Activated T-helper 2 cell treated with anti-CD3 and anti-CD28 coated beads, Interferon-gamma antibody, Interleukin-2, Interleukin-4, amounts not matched to agents 10 μg/mL and 5 μg/mL and 100 μg/mL, durations not matched to agents 14 hours and 24 hours and 36 hours (primary cell): ENCODE measurements at regions of chr7 and their contacts with region 1.

Region 1: GRCh38 chr7:19677180-19677579 is 31.7 kb downstream of the POLR1F start:
- DNase-seq: no peak
- H3K4me3 Mint-ChIP-seq: no peak overlapping the region
- H3K27ac Mint-ChIP-seq: peak overlapping the region; percentile 72
- H3K4me1 Mint-ChIP-seq: peaks cover 21% of the 10 kb centered on the region
- H3K27me3 Mint-ChIP-seq: peaks cover 10% of the 10 kb centered on the region

Region 2: DNA sequence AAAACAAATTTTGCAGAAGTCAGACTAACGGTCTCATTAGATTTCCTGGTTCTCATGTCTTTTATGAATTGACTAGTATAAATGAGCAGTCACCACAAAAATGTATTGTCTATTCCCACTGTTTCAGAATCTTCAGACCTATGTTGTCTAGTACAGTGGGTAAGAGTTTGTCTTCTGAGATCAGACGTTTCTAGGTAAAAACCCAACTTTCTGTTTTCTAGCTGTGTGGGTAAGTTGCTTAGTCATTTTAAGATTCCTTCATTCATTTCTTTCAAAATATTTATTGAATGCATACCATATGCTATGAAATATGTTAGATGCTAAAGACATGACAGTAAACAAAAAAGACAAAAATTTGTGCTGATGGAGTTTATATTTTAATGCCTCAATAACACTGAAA is 124.6 kb before region 1 on chr7:
- intact Hi-C with region 1: loop called (anchors 1 kb)
- DNase-seq: no peak
- H3K4me3 Mint-ChIP-seq: no peak overlapping the region
- H3K27ac Mint-ChIP-seq: peak overlapping the region; percentile 46
- H3K4me1 Mint-ChIP-seq: peaks cover 12% of the 10 kb centered on the region
- H3K27me3 Mint-ChIP-seq: no peaks in the 10 kb centered on the region